ENCODE measurements at regions of chr14 and their contacts with region 1.

Region 1: GRCh38 chr14:76778546-76779215 is 17.4 kb downstream of the VASH1 start:
- DNase-seq: peak in 1 of 9 experiments; percentile 44
- ATAC-seq: no peak
- H3K4me3 ChIP-seq: no peak overlapping the region
- H3K4me3 Mint-ChIP-seq: no peak overlapping the region
- H3K27ac ChIP-seq: no peak overlapping the region
- H3K27ac Mint-ChIP-seq: no peak overlapping the region
- H3K4me1 ChIP-seq: no peaks in the 10 kb centered on the region
- H3K4me1 Mint-ChIP-seq: peaks cover 1% of the 10 kb centered on the region
- H3K27me3 ChIP-seq: no peaks in the 10 kb centered on the region
- H3K27me3 Mint-ChIP-seq: no peaks in the 10 kb centered on the region
- CTCF ChIP-seq: no peak

Region 2: DNA sequence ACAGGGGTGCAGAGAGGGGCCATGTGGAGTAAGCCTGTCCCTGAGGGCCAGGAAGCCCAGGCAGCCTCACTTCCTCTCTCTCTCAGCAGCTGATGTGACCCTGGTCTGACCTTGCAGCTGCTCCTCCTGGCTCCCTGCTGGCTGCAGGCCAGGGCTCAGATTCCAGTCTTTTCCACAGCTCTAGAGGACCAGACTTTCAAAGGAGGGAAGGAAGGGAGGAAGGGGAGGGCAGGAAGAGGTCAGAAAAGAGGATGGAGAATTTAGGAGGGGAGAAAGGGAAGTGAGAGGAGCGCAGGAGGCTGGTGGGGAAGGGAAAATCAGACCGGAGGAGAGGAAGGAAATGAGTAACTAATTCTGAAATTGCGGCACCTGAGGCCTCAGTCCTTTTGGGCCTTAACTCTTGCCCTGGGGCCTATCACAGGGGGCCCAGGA is 58.3 kb before region 1 on chr14:
- CTCF ChIA-PET with region 1: no interaction called
- POLR2A ChIA-PET with region 1: no interaction called
- intact Hi-C with region 1: loop called in 1 of 2 experiments (anchors 2 kb)
- DNase-seq: no peak
- ATAC-seq: no peak
- H3K4me3 ChIP-seq: no peak overlapping the region
- H3K4me3 Mint-ChIP-seq: no peak overlapping the region
- H3K27ac ChIP-seq: no peak overlapping the region
- H3K27ac Mint-ChIP-seq: no peak overlapping the region
- H3K4me1 ChIP-seq: no peaks in the 10 kb centered on the region
- H3K4me1 Mint-ChIP-seq: no peaks in the 10 kb centered on the region
- H3K27me3 ChIP-seq: no peaks in the 10 kb centered on the region
- H3K27me3 Mint-ChIP-seq: peaks cover 28% of the 10 kb centered on the region
- CTCF ChIP-seq: no peak